Breast epithelium (tissue), 4 donors: ENCODE measurements at regions of chr4 and their contacts with region 1.

Region 1: DNA sequence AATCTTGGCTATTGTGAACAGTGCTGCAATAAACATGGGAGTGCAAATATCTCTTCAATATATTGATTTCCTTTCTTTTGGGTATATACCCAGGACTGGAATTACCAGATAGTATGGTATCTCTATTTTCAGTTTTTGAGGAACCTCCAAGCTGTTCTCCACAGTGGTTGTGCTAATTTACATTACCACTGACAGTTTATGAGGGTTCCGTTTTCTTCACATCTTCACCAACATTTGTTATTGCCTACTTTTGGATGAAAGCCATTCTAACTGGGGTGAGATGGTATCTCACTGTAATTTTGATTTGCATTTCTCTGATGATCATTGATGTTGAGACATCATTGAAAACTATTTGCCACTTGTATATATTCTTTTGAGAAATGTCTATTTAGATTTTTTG is 79.6 kb upstream of the ZNF827 start:
- DNase-seq: no peak
- H3K4me3 ChIP-seq: no peak overlapping the region
- H3K27ac ChIP-seq: no peak overlapping the region
- H3K4me1 ChIP-seq: no peaks in the 10 kb centered on the region
- H3K27me3 ChIP-seq: no peaks in the 10 kb centered on the region
- CTCF ChIP-seq: no peak
- POLR2A ChIP-seq: no peak

Region 2: DNA sequence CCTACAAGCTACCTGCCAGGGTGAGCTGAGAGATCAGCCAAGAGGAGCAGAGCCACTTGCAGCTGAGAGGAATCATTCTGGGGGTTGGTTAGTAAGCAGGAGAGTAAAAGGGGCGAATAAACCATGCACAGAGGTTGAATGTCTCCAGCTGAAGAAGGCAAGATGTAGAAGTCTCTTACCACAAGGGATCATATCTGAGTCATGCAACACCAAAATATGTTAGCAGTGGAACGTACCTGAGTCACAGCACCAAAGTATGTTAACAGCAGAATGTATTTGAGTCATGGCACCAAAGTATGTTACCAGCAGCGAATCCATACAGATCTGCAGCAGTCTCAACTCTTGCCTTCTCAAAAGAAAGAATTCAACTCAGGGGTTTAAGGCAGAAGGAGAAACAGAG is 308.4 kb before region 1 on chr4:
- intact Hi-C with region 1: loop called (anchors 5 kb)
- DNase-seq: no peak
- H3K4me3 ChIP-seq: no peak overlapping the region
- H3K27ac ChIP-seq: peak overlapping the region; percentile 76 to 85
- H3K4me1 ChIP-seq: peaks cover 0 to 23% of the 10 kb centered on the region in 2 donors
- H3K27me3 ChIP-seq: no peaks in the 10 kb centered on the region
- CTCF ChIP-seq: no peak
- POLR2A ChIP-seq: no peak